B cell (primary cell): ENCODE measurements at regions of chr7 and their contacts with region 1.

Region 1: GRCh38 chr7:151226875-151227782 is at the start of gene ABCF2:
- DNase-seq: peak; percentile 97
- ATAC-seq: peak; percentile 99
- H3K4me3 ChIP-seq: peak within 1 kb of the TSS; percentile 60 to 97 (median 81)
- H3K4me3 Mint-ChIP-seq: peak within 1 kb of the TSS; percentile 95
- H3K27ac ChIP-seq: peak within 1 kb of the TSS; percentile 39 to 73
- H3K27ac Mint-ChIP-seq: peak within 1 kb of the TSS; percentile 92
- H3K4me1 ChIP-seq: peaks cover 23 to 26% of the 10 kb centered on the region in 2 donors
- H3K4me1 Mint-ChIP-seq: peaks cover 48% of the 10 kb centered on the region
- H3K27me3 ChIP-seq: no peaks in the 10 kb centered on the region
- H3K27me3 Mint-ChIP-seq: no peaks in the 10 kb centered on the region
- CTCF ChIP-seq: no peak
- total RNA-seq, gene ABCF2: 27.1 and 30.2 TPM in 2 replicates

Region 2: DNA sequence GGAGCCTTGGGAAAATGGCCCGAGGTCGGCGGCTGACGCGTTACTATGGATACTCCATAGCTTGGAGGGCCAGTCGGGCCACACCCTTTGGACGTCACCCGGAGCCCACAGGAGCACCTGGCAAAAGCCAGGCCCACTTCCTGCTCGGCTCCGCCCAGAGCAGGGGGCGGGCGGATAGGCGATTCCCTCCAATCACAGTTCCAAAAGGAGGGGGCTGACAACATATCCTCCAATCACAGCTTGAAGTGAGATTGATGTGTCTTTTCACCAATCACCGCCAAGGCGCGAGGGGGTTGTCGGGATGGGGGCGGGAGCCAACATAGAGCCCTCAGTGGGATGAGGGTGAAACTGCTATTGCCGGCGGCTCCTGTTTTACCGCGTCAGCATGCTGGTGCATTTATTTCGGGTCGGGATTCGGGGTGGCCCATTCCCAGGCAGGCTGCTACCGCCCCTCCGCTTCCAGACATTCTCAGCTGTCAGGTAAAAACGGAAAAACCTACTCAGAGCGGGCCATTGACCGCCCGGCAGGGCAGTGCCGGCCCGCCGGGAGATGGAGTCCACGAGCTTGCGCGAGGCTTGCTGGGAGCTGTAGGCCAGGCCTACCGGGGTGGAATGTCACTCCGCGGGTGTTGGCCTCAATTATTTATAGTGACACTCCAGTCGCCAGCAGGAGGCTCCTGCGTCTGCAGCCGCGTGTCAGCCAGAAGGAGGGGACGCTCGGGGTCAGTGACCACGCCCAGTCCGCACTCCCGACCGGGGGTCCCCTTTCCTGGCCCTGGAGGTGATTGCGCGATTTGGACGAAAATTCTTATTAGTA is 198.8 kb before region 1 on chr7 and contains the start of gene ABCB8:
- CTCF ChIA-PET with region 1: no interaction called
- POLR2A ChIA-PET with region 1: interaction called, 3 read pairs
- intact Hi-C with region 1: loop called (anchors 1 kb)
- DNase-seq: peak; percentile 99
- ATAC-seq: peak; percentile 92
- H3K4me3 ChIP-seq: peak within 1 kb of the TSS; percentile 54 to 86 (median 78)
- H3K4me3 Mint-ChIP-seq: peak within 1 kb of the TSS; percentile 97
- H3K27ac ChIP-seq: peak within 1 kb of the TSS; percentile 95 to 96
- H3K27ac Mint-ChIP-seq: peak within 1 kb of the TSS; percentile 99
- H3K4me1 ChIP-seq: peaks cover 11 to 17% of the 10 kb centered on the region in 2 donors
- H3K4me1 Mint-ChIP-seq: peaks cover 23% of the 10 kb centered on the region
- H3K27me3 ChIP-seq: peaks cover 0 to 20% (median 7%) of the 10 kb centered on the region in 4 experiments
- H3K27me3 Mint-ChIP-seq: peaks cover 7% of the 10 kb centered on the region
- CTCF ChIP-seq: peak; percentile 25
- total RNA-seq, gene ABCB8: 64.7 and 69.7 TPM in 2 replicates

Region 3: DNA sequence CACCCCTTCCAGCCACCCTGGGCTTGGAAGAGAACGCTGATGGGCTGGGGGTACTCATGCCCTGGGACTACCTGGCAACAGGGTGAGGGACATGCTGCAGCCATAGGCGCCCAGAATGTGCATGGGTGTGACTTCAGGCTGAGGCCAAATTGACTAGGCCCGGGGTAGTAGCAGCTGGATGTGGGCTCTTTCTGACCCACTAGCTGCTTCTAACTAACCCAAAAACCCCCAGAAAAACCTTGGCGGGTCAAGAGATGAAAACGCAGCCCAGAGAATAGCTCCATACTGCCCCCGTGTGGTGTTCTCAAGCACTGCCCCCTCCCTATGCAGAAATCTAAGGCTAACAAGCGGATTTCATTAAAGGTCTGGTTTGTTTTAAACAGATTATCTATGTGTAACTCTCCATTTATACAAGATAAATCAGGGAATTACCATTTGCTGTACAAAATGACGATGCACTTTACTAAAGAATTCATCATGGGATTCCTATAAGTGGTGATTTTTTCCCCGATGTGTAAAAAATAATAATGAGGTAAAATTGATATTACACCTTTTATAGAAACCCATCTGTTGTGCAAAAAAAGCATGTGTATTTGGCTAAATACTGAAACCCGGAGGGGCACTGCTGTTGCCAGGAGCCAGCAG is 17.2 kb after region 1 on chr7:
- CTCF ChIA-PET with region 1: interaction called, 34 read pairs
- POLR2A ChIA-PET with region 1: interaction called, 13 read pairs
- intact Hi-C with region 1: loop called (anchors 1 kb)
- DNase-seq: peak; percentile 68
- ATAC-seq: peak; percentile 12
- H3K4me3 ChIP-seq: peak overlapping the region in 3 of 5 experiments; percentile 47 to 55 (median 51)
- H3K4me3 Mint-ChIP-seq: peak overlapping the region; percentile 81
- H3K27ac ChIP-seq: no peak overlapping the region
- H3K27ac Mint-ChIP-seq: no peak overlapping the region
- H3K4me1 ChIP-seq: peaks cover 41 to 47% of the 10 kb centered on the region in 2 donors
- H3K4me1 Mint-ChIP-seq: peaks cover 41% of the 10 kb centered on the region
- H3K27me3 ChIP-seq: peaks cover 0 to 40% (median 17%) of the 10 kb centered on the region in 4 experiments
- H3K27me3 Mint-ChIP-seq: peaks cover 9% of the 10 kb centered on the region
- CTCF ChIP-seq: peak; percentile 79

Region 4: DNA sequence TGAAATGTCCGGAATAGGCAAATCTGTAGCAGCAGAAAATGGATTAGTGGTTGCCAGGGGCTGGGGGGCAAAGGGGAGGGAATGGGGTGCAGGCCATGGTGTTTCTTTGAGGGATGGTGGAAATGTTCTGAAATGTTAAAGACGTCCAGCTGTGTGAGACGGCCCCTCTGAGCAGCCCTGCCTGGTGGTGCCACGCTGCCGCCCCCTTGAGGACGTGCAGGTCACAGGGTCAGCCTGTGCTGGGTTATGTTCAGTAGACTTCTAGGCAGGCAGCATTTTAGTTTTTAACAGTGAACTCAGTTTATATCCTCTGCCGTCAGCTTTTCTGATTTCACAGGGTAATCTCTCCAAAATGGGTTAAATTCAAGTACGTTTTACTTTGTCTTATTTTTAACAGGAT is 123.9 kb after region 1 on chr7:
- CTCF ChIA-PET with region 1: no interaction called
- POLR2A ChIA-PET with region 1: interaction called, 3 read pairs
- intact Hi-C with region 1: loop called (anchors 1 kb)
- DNase-seq: peak; percentile 47
- ATAC-seq: no peak
- H3K4me3 ChIP-seq: no peak overlapping the region
- H3K4me3 Mint-ChIP-seq: peak overlapping the region; percentile 56
- H3K27ac ChIP-seq: peak overlapping the region; percentile 82 to 99
- H3K27ac Mint-ChIP-seq: peak overlapping the region; percentile 76
- H3K4me1 ChIP-seq: peaks cover 36 to 41% of the 10 kb centered on the region in 2 donors
- H3K4me1 Mint-ChIP-seq: peaks cover 46% of the 10 kb centered on the region
- H3K27me3 ChIP-seq: no peaks in the 10 kb centered on the region
- H3K27me3 Mint-ChIP-seq: no peaks in the 10 kb centered on the region
- CTCF ChIP-seq: no peak

Region 5: DNA sequence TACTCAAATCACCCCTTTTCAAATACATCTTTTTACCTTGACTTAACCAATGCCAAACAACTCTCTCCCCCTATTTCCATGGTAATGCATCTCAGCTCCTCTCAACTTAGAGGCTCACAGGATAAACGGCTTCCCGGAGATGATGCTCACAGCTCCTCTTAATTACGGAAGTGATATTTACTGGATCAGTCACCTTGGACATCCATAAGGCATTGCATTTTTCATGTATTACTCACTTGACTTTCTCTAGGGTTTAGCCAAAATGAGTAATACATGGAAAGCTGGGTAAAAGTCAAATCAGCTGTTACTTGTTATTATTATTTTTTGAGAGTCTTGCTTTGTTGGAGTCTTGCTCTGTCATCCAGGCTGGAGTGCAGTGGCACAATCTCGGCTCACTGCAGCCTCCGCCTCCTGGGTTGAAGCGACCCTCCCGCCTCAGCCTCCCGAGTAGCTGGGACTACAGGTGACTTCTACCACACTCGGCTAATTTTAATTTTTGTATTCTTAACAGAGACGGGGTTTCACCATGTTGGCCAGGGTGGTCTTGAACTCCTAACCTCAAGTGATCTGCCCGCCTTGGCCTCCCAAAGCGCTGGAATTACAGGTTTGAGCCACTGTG is 365.8 kb after region 1 on chr7:
- CTCF ChIA-PET with region 1: no interaction called
- POLR2A ChIA-PET with region 1: no interaction called
- intact Hi-C with region 1: no loop called
- DNase-seq: no peak
- ATAC-seq: no peak
- H3K4me3 ChIP-seq: no peak overlapping the region
- H3K4me3 Mint-ChIP-seq: no peak overlapping the region
- H3K27ac ChIP-seq: no peak overlapping the region
- H3K27ac Mint-ChIP-seq: no peak overlapping the region
- H3K4me1 ChIP-seq: peaks cover 0 to 16% of the 10 kb centered on the region in 2 donors
- H3K4me1 Mint-ChIP-seq: peaks cover 24% of the 10 kb centered on the region
- H3K27me3 ChIP-seq: no peaks in the 10 kb centered on the region
- H3K27me3 Mint-ChIP-seq: no peaks in the 10 kb centered on the region
- CTCF ChIP-seq: no peak